IMR-90 (cell line): ENCODE measurements at regions of chr1 and their contacts with region 1.

Region 1: DNA sequence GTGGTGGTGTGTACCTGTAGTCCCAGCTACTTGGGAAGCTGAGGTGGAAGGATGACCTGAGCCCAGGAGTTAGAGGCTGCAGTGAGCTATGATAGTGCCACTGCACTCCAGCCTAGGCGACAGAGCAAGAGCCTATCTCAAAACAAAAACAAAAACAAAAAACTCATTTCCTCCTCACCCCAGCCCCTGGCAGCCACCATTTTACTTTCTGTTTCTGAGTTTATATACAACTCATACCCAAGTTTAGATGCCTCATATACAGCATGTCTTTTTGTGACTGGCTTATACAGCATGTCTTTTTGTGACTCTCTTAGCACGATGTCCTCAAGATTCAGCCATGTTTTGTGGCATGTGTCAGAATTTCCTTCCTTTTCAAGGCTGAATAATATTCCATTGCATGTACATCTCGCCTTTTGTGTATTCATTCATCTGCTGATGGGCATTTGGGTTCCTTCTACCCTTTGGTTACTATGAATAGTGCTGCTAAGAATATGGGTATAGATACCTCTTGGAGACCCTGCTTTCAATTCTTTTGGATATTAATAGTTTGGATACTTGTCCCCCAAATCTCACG is 14.7 kb downstream of the COA7 start:
- DNase-seq: no peak
- ATAC-seq: no peak
- H3K4me3 ChIP-seq: no peak overlapping the region
- H3K27ac ChIP-seq: no peak overlapping the region
- H3K4me1 ChIP-seq: no peaks in the 10 kb centered on the region
- H3K27me3 ChIP-seq: no peaks in the 10 kb centered on the region
- CTCF ChIP-seq: no peak
- POLR2A ChIP-seq: no peak
- RAD21 ChIP-seq: no peak

Region 2: GRCh38 chr1:52127181-52128180 is 556.0 kb before region 1 on chr1:
- CTCF ChIA-PET with region 1: no interaction called
- POLR2A ChIA-PET with region 1: no interaction called
- dilution Hi-C with region 1: no loop called
- in situ Hi-C with region 1: no loop called
- intact Hi-C with region 1: loop called (anchors 5 kb)
- DNase-seq: peak; percentile 77
- ATAC-seq: peak; percentile 99
- H3K4me3 ChIP-seq: no peak overlapping the region
- H3K27ac ChIP-seq: no peak overlapping the region
- H3K4me1 ChIP-seq: no peaks in the 10 kb centered on the region
- H3K27me3 ChIP-seq: no peaks in the 10 kb centered on the region; the same call in 1 of the 2 replicates
- CTCF ChIP-seq: peak; percentile 87
- POLR2A ChIP-seq: no peak
- RAD21 ChIP-seq: peak; percentile 86

Region 3: GRCh38 chr1:52365746-52366516 is 317.5 kb before region 1 on chr1 and contains the start of gene CC2D1B:
- CTCF ChIA-PET with region 1: no interaction called
- POLR2A ChIA-PET with region 1: no interaction called
- dilution Hi-C with region 1: no loop called
- in situ Hi-C with region 1: no loop called
- intact Hi-C with region 1: loop called (anchors 2 kb)
- DNase-seq: peak; percentile 94
- ATAC-seq: peak; percentile 92
- H3K4me3 ChIP-seq: peak within 1 kb of the TSS; percentile 77
- H3K27ac ChIP-seq: peak within 1 kb of the TSS; percentile 73
- H3K4me1 ChIP-seq: peaks cover 7% of the 10 kb centered on the region
- H3K27me3 ChIP-seq: no peaks in the 10 kb centered on the region
- CTCF ChIP-seq: 0 out of 2 replicates have a peak, but pooled peaks have one; percentile 2
- POLR2A ChIP-seq: peak; percentile 58
- RAD21 ChIP-seq: 0 out of 2 replicates have a peak, but pooled peaks have one; percentile 4
- total RNA-seq, gene CC2D1B: 15.6 and 17.2 TPM in 2 replicates

Region 4: DNA sequence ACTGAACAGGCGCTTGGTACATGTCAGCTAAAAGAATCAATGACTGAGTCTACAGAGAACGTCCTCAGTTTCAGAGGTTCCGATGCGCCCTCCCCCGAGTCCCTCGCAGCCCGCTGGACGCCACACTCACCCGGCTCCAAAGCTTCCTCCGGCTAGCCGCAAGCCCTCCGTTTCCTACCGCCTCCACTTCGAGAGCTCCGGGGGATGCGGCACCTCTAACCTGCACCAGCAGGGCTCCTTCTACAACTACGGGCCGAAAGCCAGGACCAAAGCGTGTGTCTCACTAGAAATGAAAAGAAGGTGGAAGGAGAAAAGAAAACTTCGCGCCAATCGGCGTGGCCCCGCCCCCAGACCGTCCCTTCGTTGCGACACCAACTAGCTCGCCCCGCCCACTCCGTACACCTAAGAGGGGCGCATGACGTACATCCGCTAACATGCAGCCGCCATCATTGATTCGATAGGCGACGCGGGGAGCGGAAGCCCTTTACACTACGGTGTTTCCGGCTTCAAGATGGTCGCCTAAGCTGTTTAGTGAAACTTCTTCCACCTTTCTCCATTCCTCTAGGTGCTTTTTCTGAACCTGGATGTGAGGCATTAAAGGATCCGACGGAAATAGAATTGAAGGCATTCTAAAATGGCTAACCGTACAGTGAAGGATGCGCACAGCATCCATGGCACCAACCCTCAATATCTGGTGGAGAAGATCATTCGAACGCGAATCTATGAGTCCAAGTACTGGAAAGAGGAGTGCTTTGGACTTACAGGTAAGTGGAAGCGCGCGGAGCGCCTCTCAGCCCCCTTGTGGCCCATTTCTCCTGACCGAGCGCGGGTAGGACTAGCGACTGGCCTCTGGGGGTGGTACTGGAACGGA is 279.1 kb before region 1 on chr1 and contains the starts of genes ORC1 and PRPF38A:
- CTCF ChIA-PET with region 1: no interaction called
- POLR2A ChIA-PET with region 1: no interaction called
- dilution Hi-C with region 1: no loop called
- in situ Hi-C with region 1: loop called (anchors 10 kb)
- intact Hi-C with region 1: loop called (anchors 1 kb)
- DNase-seq: peak; percentile 97
- ATAC-seq: peak; percentile 96
- H3K4me3 ChIP-seq: peak within 1 kb of the TSS; percentile 83
- H3K27ac ChIP-seq: peak within 1 kb of the TSS; percentile 82
- H3K4me1 ChIP-seq: no peaks in the 10 kb centered on the region
- H3K27me3 ChIP-seq: no peaks in the 10 kb centered on the region
- CTCF ChIP-seq: peak; percentile 68
- POLR2A ChIP-seq: peak; percentile 88
- RAD21 ChIP-seq: peak; percentile 40
- total RNA-seq, gene ORC1: 9.7 and 10.6 TPM in 2 replicates
- total RNA-seq, gene PRPF38A: 17.2 and 23.5 TPM in 2 replicates

Region 5: DNA sequence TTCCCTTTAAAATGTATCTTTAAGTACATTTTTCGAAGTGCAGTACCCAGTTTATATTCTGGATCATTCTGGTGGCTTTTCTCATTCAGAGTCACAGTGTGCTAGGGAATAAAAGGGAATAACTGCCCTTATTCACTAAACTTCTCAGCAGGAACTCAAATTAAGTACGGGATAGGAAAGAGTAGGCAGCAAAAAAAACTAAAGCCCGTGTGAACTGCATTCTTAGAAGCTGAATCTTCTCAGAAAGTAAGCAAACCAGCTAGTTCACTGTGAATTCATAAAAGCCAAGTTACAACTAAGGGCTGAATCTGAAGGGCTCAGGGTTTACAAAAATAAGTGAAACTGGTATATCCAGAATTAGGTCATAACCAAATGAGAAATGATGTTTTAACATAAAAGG is 257.1 kb before region 1 on chr1:
- CTCF ChIA-PET with region 1: no interaction called
- POLR2A ChIA-PET with region 1: no interaction called
- dilution Hi-C with region 1: no loop called
- in situ Hi-C with region 1: no loop called
- intact Hi-C with region 1: loop called (anchors 5 kb)
- DNase-seq: peak; percentile 86
- ATAC-seq: peak; percentile 89
- H3K4me3 ChIP-seq: no peak overlapping the region
- H3K27ac ChIP-seq: no peak overlapping the region
- H3K4me1 ChIP-seq: peaks cover 16% of the 10 kb centered on the region
- H3K27me3 ChIP-seq: no peaks in the 10 kb centered on the region
- CTCF ChIP-seq: no peak
- POLR2A ChIP-seq: no peak
- RAD21 ChIP-seq: no peak

Region 6: DNA sequence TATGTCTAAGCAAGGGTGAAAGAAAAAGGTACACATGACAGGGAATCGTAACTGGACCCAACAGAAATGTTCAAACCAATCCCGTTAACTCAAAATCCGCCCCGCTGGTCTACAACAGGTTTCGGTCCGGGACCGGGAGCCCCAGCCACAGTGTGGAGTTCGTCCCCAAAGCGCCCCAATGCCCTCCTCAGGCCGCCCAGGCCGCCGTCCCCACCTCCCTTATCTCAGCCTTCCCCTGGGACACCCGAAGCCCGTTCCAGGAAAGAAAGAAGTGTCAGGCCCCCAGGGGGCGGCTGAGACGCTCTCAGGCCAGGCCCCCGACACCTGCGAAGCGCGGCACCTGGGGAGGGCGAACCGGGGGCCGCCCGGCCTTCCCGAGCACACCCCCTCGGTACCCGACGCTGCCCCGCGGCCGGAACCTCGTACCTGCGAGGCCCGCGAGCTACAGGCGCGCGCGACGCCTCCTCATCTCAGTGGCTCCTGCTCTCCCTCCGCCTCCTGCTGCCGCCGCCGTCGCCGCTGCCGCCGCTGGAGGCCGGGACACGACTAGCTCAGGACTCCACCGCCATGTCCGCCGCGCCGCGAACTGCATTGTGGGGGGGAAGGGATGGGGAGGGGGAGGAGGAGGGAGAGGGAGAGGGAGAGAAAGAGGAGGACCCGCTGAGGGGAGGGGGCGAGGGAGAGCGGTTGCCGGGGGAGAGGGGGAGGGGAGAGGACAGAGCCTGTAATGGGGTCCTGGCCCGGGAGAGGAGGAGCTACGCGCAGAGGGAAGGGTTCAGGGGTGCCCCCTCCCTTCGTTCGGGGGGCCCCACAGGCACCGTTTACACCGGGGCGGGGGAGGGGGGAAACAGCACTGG is 130.7 kb before region 1 on chr1 and contains the start of gene TUT4:
- CTCF ChIA-PET with region 1: no interaction called
- POLR2A ChIA-PET with region 1: no interaction called
- dilution Hi-C with region 1: no loop called
- in situ Hi-C with region 1: no loop called
- intact Hi-C with region 1: loop called (anchors 1 kb)
- DNase-seq: peak; percentile 75
- ATAC-seq: peak; percentile 74
- H3K4me3 ChIP-seq: peak within 1 kb of the TSS; percentile 91
- H3K27ac ChIP-seq: peak within 1 kb of the TSS; percentile 81
- H3K4me1 ChIP-seq: peaks cover 4% of the 10 kb centered on the region
- H3K27me3 ChIP-seq: no peaks in the 10 kb centered on the region
- CTCF ChIP-seq: 0 out of 2 replicates have a peak, but pooled peaks have one; percentile 10
- POLR2A ChIP-seq: no peak
- RAD21 ChIP-seq: no peak
- total RNA-seq, gene TUT4: 10.9 and 28.6 TPM in 2 replicates

Region 7: DNA sequence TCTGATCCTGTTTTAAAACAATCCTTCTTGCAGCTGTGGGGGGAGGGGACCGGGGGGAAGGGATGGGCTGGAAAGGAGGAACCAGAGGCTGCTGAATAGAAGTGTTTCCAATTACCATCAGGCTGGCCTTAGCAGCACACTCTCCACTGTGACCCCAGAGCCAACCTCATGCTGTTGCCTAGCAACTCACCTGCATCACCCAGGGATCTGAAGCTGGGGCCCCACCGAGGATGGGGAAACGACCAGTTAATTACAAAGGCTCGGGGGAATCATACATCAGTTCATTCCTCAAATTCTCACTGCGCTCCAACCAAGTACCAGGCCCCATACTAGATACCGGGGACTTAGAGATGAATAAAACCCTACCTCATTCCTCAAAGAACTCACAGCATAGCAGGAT is 93.2 kb before region 1 on chr1:
- CTCF ChIA-PET with region 1: no interaction called
- POLR2A ChIA-PET with region 1: no interaction called
- dilution Hi-C with region 1: no loop called
- in situ Hi-C with region 1: no loop called
- intact Hi-C with region 1: no loop called
- DNase-seq: no peak
- ATAC-seq: no peak
- H3K4me3 ChIP-seq: no peak overlapping the region
- H3K27ac ChIP-seq: no peak overlapping the region
- H3K4me1 ChIP-seq: peaks cover 1% of the 10 kb centered on the region; the same call in 1 of the 2 replicates
- H3K27me3 ChIP-seq: peaks cover 18% of the 10 kb centered on the region
- CTCF ChIP-seq: no peak
- POLR2A ChIP-seq: no peak
- RAD21 ChIP-seq: no peak